ENCODE measurements at regions of chr12 and their contacts with region 1.

Region 1: DNA sequence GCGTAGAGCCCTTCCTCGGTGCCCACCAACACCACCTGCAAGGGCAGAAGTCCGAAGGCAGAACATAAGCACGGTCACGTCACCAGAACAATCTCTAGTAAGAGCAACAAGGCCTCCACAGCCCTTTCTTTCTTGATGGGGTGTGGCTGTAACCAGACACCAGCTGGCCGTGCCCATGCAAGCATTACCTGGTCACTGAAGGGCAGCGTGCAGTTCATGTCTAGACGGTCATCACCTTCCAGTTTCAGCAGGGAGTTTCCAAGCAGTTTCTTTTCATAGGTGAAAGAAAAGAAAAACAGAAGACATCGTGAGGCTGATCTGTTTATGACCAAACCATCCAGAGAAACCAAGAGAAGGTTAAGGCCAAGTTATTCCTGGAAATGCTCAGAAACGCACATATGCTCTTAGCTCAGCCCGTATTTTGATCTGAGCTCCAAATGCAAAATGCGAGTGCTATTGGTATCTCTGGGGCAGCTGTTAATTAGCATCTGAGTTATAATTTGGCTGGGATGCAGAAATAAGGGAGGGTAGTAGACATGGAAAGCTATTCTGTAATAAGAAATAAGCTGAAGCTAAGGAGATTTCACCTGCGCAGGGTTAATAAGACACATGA is 42.5 kb downstream of the PRKAB1 start:
- DNase-seq: no peak
- ATAC-seq: no peak
- H3K4me3 ChIP-seq: no peak overlapping the region
- H3K27ac ChIP-seq: no peak overlapping the region
- H3K4me1 ChIP-seq: no peaks in the 10 kb centered on the region
- H3K27me3 ChIP-seq: no peaks in the 10 kb centered on the region
- CTCF ChIP-seq: no peak

Region 2: GRCh38 chr12:119667577-119668323 is 42.7 kb before region 1 on chr12 and contains the start of gene PRKAB1:
- intact Hi-C with region 1: loop called in 1 of 10 experiments (anchors 5 kb)
- DNase-seq: peak; percentile 94 to 95
- ATAC-seq: peak; percentile 99 to 100 (median 99)
- H3K4me3 ChIP-seq: peak within 1 kb of the TSS; percentile 64 to 99 (median 90)
- H3K27ac ChIP-seq: peak within 1 kb of the TSS; percentile 83 to 97 (median 94)
- H3K4me1 ChIP-seq: peaks cover 7 to 65% (median 48%) of the 10 kb centered on the region in 9 donors
- H3K27me3 ChIP-seq: no peaks in the 10 kb centered on the region
- CTCF ChIP-seq: peak; percentile 88 to 100 (median 91)
- total RNA-seq, gene PRKAB1: 8.6 to 14.5 (median 10.4) TPM

Region 3: GRCh38 chr12:119762619-119763018 is 52.2 kb after region 1 on chr12:
- intact Hi-C with region 1: loop called in 1 of 10 experiments (anchors 10 kb)
- DNase-seq: no peak
- ATAC-seq: no peak
- H3K4me3 ChIP-seq: no peak overlapping the region
- H3K27ac ChIP-seq: no peak overlapping the region
- H3K4me1 ChIP-seq: no peaks in the 10 kb centered on the region
- H3K27me3 ChIP-seq: no peaks in the 10 kb centered on the region
- CTCF ChIP-seq: no peak

Measured in heart right ventricle (tissue), 16 donors.